Naive thymus-derived CD4-positive, alpha-beta T cell (primary cell): ENCODE measurements at regions of chr16 and their contacts with region 1.

Region 1: GRCh38 chr16:81723098-81723723 is 55.9 kb upstream of the PLCG2 start:
- DNase-seq: peak in 7 of 9 donors; percentile 51 to 72 (median 69)
- ATAC-seq: peak; percentile 86
- H3K4me3 ChIP-seq: no peak overlapping the region
- H3K4me3 Mint-ChIP-seq: no peak overlapping the region
- H3K27ac ChIP-seq: no peak overlapping the region
- H3K27ac Mint-ChIP-seq: peak overlapping the region in 2 of 9 donors; percentile 19 to 67
- H3K4me1 ChIP-seq: no peaks in the 10 kb centered on the region
- H3K4me1 Mint-ChIP-seq: peaks cover 6 to 21% (median 12%) of the 10 kb centered on the region in 7 donors
- H3K27me3 ChIP-seq: no peaks in the 10 kb centered on the region
- H3K27me3 Mint-ChIP-seq: peaks cover 0 to 4% (median 0%) of the 10 kb centered on the region in 5 donors

Region 2: DNA sequence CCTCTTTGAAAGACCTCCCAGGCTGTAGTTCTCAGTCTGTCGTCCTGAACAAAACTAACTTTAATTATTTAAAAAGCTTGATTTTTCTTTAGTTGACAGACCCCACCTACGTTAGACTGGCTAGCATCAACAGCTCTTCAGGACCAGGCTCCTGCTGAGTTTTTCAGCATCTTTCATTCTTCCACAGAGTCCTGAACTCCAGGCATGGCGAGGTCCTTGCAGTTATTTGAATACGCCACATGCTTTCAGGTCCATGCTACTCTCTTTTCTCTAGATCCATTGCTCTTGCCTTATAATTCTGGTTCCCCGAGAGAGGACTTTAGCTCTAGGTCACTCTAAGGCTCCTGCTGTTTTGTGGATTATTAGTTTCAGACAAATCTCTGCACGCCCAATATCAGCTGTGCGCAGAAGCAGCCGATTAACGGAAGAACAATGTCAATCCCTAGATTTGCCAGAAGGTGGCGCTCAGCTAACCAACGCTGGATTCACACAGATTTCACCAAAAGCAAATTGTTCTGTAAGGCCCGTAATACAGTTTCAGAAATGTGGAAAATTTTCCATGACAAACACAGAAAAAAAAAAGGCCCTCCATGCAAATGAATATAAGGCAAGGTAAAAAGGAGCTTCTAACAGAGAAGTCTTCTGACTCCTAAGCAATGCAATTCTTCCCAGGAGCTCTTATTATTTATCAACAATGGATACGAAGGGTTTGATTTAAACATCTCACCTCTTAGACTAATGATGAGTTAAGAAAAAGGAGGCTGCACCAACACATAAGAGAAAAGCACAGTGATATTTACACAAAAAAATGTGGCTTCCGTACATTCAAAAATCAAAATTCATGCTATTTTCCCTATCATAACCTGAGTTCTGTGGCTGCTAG is 518.2 kb before region 1 on chr16:
- CTCF ChIA-PET with region 1: no interaction called
- POLR2A ChIA-PET with region 1: no interaction called
- intact Hi-C with region 1: loop called in 1 of 2 experiments (anchors 5 kb)
- DNase-seq: peak in 5 of 9 donors; percentile 10 to 43 (median 33)
- ATAC-seq: peak; percentile 45
- H3K4me3 ChIP-seq: no peak overlapping the region
- H3K4me3 Mint-ChIP-seq: no peak overlapping the region
- H3K27ac ChIP-seq: no peak overlapping the region
- H3K27ac Mint-ChIP-seq: no peak overlapping the region
- H3K4me1 ChIP-seq: no peaks in the 10 kb centered on the region
- H3K4me1 Mint-ChIP-seq: peaks cover 0 to 7% (median 4%) of the 10 kb centered on the region in 7 donors
- H3K27me3 ChIP-seq: no peaks in the 10 kb centered on the region
- H3K27me3 Mint-ChIP-seq: peaks cover 10 to 19% (median 17%) of the 10 kb centered on the region in 5 donors

Region 3: GRCh38 chr16:81261049-81261648 is 462.1 kb before region 1 on chr16:
- CTCF ChIA-PET with region 1: no interaction called
- POLR2A ChIA-PET with region 1: no interaction called
- intact Hi-C with region 1: loop called in 1 of 2 experiments (anchors 5 kb)
- DNase-seq: peak in 4 of 9 donors; percentile 2 to 16 (median 6)
- ATAC-seq: peak; percentile 31
- H3K4me3 ChIP-seq: no peak overlapping the region
- H3K4me3 Mint-ChIP-seq: no peak overlapping the region
- H3K27ac ChIP-seq: no peak overlapping the region
- H3K27ac Mint-ChIP-seq: no peak overlapping the region
- H3K4me1 ChIP-seq: no peaks in the 10 kb centered on the region
- H3K4me1 Mint-ChIP-seq: peaks cover 0 to 4% (median 0%) of the 10 kb centered on the region in 7 donors
- H3K27me3 ChIP-seq: no peaks in the 10 kb centered on the region
- H3K27me3 Mint-ChIP-seq: peaks cover 0 to 11% (median 5%) of the 10 kb centered on the region in 5 donors

Region 4: DNA sequence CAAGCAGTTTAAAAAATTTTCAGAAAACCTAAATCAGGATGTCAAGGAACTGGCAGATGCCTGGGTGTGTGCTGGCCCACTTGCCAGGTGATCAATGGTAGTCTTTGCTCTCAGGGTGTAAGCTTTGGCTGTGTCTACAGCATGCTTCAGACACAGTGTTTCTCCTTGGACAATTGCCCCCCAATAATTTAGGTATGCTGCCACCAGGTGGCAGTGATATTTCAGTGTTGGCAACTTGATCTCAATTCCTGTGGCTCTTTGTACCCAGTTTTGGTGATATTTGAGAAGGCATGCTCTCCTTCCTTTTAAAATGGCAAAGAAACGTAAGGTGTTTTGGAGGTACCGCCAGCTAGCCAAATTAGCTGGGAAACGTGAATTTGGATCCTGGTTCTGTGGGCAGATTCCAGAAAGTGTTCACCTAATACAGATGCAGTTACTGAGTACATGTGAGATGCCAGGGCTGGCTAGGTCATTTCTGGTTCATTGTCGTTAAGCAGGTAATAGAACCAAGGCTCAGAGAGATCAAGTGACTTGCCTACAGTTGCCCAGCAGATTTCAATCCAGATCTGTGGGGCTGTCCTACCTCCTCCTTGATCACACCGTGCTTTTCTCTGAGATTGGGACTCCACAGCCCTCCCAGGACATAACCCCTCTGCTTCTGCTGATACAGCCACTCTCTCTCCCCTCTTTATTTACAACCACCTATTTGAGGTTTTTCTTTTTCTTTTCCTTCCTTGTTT is 99.7 kb before region 1 on chr16:
- CTCF ChIA-PET with region 1: interaction called, 21 read pairs
- POLR2A ChIA-PET with region 1: no interaction called
- intact Hi-C with region 1: loop called (anchors 1 kb)
- DNase-seq: peak in 7 of 9 donors; percentile 10 to 58 (median 39)
- ATAC-seq: peak; percentile 65
- H3K4me3 ChIP-seq: no peak overlapping the region
- H3K4me3 Mint-ChIP-seq: no peak overlapping the region
- H3K27ac ChIP-seq: no peak overlapping the region
- H3K27ac Mint-ChIP-seq: peak overlapping the region in 4 of 9 donors; percentile 1 to 54 (median 18)
- H3K4me1 ChIP-seq: no peaks in the 10 kb centered on the region
- H3K4me1 Mint-ChIP-seq: peaks cover 0 to 25% (median 0%) of the 10 kb centered on the region in 7 donors
- H3K27me3 ChIP-seq: no peaks in the 10 kb centered on the region
- H3K27me3 Mint-ChIP-seq: no peaks in the 10 kb centered on the region

Region 5: GRCh38 chr16:81647527-81647926 is 75.7 kb before region 1 on chr16:
- CTCF ChIA-PET with region 1: no interaction called
- POLR2A ChIA-PET with region 1: no interaction called
- intact Hi-C with region 1: no loop called
- DNase-seq: no peak
- ATAC-seq: no peak
- H3K4me3 ChIP-seq: no peak overlapping the region
- H3K4me3 Mint-ChIP-seq: no peak overlapping the region
- H3K27ac ChIP-seq: no peak overlapping the region
- H3K27ac Mint-ChIP-seq: peak overlapping the region in 3 of 9 donors; percentile 4 to 62 (median 9)
- H3K4me1 ChIP-seq: no peaks in the 10 kb centered on the region
- H3K4me1 Mint-ChIP-seq: peaks cover 9 to 20% (median 15%) of the 10 kb centered on the region in 7 donors
- H3K27me3 ChIP-seq: no peaks in the 10 kb centered on the region
- H3K27me3 Mint-ChIP-seq: no peaks in the 10 kb centered on the region